Mammary epithelial cell (primary cell): ENCODE measurements at regions of chr5 and their contacts with region 1.

Region 1: GRCh38 chr5:179827680-179828079 is 7.0 kb downstream of the SQSTM1 start:
- DNase-seq: peak; percentile 40
- H3K4me3 ChIP-seq: no peak overlapping the region
- H3K27ac ChIP-seq: no peak overlapping the region
- H3K4me1 ChIP-seq: peaks cover 2% of the 10 kb centered on the region
- H3K27me3 ChIP-seq: no peaks in the 10 kb centered on the region
- CTCF ChIP-seq: no peak

Region 2: GRCh38 chr5:179747811-179748210 is 79.9 kb before region 1 on chr5:
- CTCF ChIA-PET with region 1: no interaction called
- dilution Hi-C with region 1: loop called (anchors 5 kb)
- in situ Hi-C with region 1: no loop called
- intact Hi-C with region 1: no loop called
- DNase-seq: no peak
- H3K4me3 ChIP-seq: no peak overlapping the region
- H3K27ac ChIP-seq: no peak overlapping the region
- H3K4me1 ChIP-seq: no peaks in the 10 kb centered on the region
- H3K27me3 ChIP-seq: no peaks in the 10 kb centered on the region
- CTCF ChIP-seq: no peak

Region 3: GRCh38 chr5:179914032-179914755 is 86.5 kb after region 1 on chr5:
- CTCF ChIA-PET with region 1: no interaction called
- dilution Hi-C with region 1: loop called (anchors 5 kb)
- in situ Hi-C with region 1: no loop called
- intact Hi-C with region 1: no loop called
- DNase-seq: peak; percentile 88
- H3K4me3 ChIP-seq: no peak overlapping the region
- H3K27ac ChIP-seq: peak overlapping the region; percentile 33
- H3K4me1 ChIP-seq: peaks cover 18% of the 10 kb centered on the region
- H3K27me3 ChIP-seq: peaks cover 3% of the 10 kb centered on the region
- CTCF ChIP-seq: no peak

Region 4: DNA sequence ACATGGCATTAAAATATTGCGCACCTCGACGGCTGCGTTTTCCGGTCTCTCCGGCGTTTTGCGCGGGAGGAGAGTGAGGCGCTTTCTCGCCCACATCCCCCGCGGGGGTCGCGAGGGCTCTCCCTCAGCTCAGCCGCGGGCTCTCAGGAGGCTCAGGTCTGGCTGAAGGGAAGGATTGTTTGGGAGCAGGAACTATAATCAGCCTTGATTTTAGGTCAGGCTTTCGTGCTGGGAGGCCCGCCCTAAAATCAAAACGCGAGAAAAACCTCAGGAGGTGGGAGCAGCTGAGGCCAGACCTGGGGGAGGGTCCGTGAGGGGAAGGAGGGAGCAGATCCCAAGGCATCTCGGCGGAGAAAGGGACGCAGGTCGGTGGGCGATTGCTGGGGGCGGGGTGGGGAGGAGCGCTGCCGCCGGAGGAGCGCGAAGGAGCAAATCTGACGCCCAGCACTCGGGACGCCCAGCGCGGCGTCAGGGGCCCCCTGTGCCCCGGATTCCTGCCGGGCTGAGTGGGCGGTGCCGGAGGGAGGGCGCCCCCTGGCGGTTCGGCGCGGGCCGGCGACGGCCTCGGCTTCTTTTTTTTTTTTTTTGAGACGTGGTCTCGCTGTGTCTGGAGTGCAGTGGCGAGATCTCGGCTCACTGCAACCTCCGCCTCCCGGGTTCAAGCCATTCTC is 262.6 kb after region 1 on chr5:
- CTCF ChIA-PET with region 1: no interaction called
- dilution Hi-C with region 1: no loop called
- in situ Hi-C with region 1: no loop called
- intact Hi-C with region 1: no loop called
- DNase-seq: peak; percentile 30
- H3K4me3 ChIP-seq: peak overlapping the region; percentile 6 to 49 (median 38)
- H3K27ac ChIP-seq: no peak overlapping the region
- H3K4me1 ChIP-seq: no peaks in the 10 kb centered on the region
- H3K27me3 ChIP-seq: peaks cover 2% of the 10 kb centered on the region
- CTCF ChIP-seq: peak; percentile 31 to 76